RWPE1 (cell line): ENCODE measurements at regions of chr9 and their contacts with region 1.

Region 1: DNA sequence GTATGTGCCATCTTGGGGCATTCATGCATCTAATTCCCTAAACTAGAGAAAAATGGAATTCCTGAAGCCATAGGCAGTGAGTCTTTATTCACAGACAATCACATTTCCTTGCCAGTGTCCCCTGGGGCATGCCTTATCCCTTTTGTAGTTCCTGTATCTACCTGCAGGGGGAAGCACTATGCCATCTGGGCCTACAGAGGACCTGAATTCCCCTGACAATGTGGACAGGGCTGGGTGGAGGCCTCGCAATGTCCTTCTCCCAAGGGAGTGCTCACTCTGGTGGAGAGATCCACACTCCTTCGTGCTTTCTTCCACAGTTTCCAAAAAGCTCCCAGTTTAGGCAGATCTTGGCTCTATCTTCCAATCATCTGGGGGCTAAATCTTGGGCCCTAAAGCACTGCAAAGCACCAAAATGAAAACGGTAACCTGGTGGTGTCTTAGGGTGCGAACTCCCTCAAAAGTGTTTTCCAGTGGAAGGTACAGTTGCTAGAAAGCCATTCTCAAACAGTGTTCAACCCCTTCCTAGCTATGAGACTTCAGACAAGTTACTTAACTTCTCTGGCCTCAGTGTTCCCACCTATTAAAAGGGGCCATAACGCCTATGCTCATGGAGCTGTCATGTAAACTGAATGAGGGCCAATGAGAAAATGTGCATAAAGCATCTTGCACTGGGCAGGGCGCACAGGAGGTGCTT is 17.5 kb downstream of the WHRN start:
- DNase-seq: peak; percentile 80
- H3K27ac ChIP-seq: no peak overlapping the region
- CTCF ChIP-seq: peak; percentile 93

Region 2: DNA sequence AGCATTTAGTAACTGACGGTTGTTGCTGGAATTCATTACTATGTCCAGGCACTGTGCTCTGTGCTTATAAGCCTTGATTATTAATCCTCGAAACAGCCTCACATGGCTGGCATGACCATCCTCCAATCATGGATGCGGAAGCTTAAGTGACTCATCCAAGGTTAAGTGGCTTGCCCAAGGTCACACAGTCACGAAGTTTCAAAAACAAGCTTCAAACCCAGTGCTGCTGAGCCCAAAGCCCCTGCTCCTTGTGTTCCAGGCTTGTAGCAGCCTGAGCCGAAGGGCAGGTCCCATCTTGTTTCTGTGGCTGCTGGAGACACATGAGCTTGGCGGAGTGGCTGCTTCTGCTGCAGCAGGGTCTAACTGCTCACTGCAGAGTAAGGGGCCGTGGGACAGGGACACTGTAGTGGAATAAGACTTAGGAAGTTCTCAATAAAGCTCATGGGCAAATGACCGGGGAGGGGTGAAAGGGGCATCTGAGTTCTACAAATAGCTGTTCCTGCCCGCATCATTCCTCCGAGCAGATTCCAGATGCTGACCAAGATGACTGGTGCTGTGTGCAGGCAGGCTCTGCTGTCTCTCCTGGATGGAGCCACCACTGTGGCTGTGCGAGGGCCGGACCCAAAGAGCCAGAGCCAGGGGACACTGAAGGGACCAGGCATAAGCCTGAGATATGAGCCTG is 14.8 kb before region 1 on chr9:
- CTCF ChIA-PET with region 1: interaction called, 16 read pairs
- POLR2A ChIA-PET with region 1: no interaction called
- DNase-seq: peak; percentile 78
- H3K27ac ChIP-seq: peak overlapping the region; percentile 81
- CTCF ChIP-seq: no peak